CD8-positive, alpha-beta T cell (primary cell): ENCODE measurements at regions of chr2 and their contacts with region 1.

Region 1: DNA sequence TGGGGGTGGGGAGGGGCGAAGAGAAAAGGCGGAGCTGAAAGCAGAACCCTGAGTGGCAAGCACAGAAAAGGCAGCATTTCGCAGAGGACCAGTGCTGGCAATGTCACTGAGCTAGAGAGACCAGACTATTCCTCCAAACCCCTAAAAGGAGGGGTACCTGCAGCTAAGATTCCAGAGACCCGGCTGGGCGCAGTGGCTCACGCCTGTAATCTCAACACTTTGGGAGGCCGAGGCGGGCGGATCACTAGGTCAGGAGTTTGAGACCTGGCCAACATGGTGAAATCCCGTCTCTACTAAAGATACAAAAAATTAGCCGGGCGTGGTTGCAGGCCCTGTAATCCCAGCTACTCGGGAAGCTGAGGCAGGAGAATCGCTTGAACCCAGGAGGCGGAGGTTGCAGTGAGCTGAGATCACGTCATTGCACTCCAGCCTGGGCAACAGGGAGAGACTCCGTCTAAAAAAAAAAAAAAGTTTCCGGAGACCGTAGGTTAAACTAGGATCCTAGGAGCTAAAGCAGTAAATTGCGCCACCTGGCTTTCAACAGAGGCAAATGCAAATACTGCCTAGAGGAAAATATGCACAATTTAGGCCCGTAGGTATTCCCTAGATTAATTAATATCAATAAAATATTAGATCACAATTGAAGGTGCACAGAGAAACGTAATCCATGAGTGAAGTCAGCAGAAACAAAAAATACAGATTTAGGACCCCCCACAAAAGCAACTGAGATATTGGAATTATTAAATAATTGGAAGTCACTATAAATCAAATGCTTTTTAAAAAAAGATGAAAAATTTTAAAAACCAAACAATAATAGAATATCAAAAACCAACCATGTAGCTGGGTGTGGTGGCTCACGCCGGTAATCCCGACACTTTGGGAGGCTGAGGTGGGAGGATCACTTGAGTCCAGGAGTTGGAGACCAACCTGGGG is 4.9 kb downstream of the UCN start:
- DNase-seq: peak in 5 of 9 experiments; percentile 43 to 76 (median 52)
- ATAC-seq: peak; percentile 69
- H3K4me3 ChIP-seq: peak overlapping the region; percentile 2 to 45
- H3K4me3 Mint-ChIP-seq: peak overlapping the region; percentile 74
- H3K27ac ChIP-seq: no peak overlapping the region
- H3K27ac Mint-ChIP-seq: no peak overlapping the region
- H3K4me1 ChIP-seq: peaks cover 14% of the 10 kb centered on the region
- H3K4me1 Mint-ChIP-seq: peaks cover 9% of the 10 kb centered on the region
- H3K27me3 ChIP-seq: peaks cover 5 to 6% of the 10 kb centered on the region in 2 experiments
- H3K27me3 Mint-ChIP-seq: peaks cover 28% of the 10 kb centered on the region
- CTCF ChIP-seq: peak; percentile 90

Region 2: DNA sequence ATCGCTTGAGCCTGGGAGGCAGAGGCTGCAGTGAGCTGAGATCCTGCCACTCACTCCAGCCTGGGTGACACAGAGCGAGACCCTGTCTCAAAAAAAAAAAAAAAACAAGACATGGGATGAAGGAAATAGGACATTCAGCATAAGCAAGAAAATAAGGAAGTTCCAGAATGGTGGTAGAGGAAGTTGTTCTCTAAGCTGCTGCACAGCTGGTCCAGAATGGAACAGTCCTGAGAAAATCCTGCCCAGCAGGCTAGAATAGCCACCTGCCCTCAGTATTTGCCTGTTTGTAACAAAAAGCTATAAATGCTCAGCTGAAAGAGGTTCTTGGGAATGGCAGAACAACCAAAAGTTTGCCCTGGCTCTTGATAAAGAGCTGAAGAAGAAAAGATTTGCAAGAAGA is 344.0 kb before region 1 on chr2:
- CTCF ChIA-PET with region 1: interaction called, 20 read pairs
- POLR2A ChIA-PET with region 1: no interaction called
- intact Hi-C with region 1: loop called (anchors 1 kb)
- DNase-seq: no peak
- ATAC-seq: no peak
- H3K4me3 ChIP-seq: no peak overlapping the region
- H3K4me3 Mint-ChIP-seq: no peak overlapping the region
- H3K27ac ChIP-seq: no peak overlapping the region
- H3K27ac Mint-ChIP-seq: no peak overlapping the region
- H3K4me1 ChIP-seq: no peaks in the 10 kb centered on the region
- H3K4me1 Mint-ChIP-seq: no peaks in the 10 kb centered on the region
- H3K27me3 ChIP-seq: peaks cover 0 to 2% of the 10 kb centered on the region in 2 experiments
- H3K27me3 Mint-ChIP-seq: peaks cover 35% of the 10 kb centered on the region
- CTCF ChIP-seq: no peak

Region 3: GRCh38 chr2:27249891-27250651 is 53.3 kb before region 1 on chr2:
- CTCF ChIA-PET with region 1: interaction called, 13 read pairs
- POLR2A ChIA-PET with region 1: no interaction called
- intact Hi-C with region 1: loop called (anchors 1 to 2 kb)
- DNase-seq: peak in 8 of 9 experiments; percentile 18 to 65 (median 53)
- ATAC-seq: peak; percentile 79
- H3K4me3 ChIP-seq: no peak overlapping the region
- H3K4me3 Mint-ChIP-seq: no peak overlapping the region
- H3K27ac ChIP-seq: no peak overlapping the region
- H3K27ac Mint-ChIP-seq: no peak overlapping the region
- H3K4me1 ChIP-seq: peaks cover 4% of the 10 kb centered on the region
- H3K4me1 Mint-ChIP-seq: peaks cover 2% of the 10 kb centered on the region
- H3K27me3 ChIP-seq: peaks cover 0 to 3% of the 10 kb centered on the region in 2 experiments
- H3K27me3 Mint-ChIP-seq: peaks cover 15% of the 10 kb centered on the region
- CTCF ChIP-seq: peak; percentile 56

Region 4: DNA sequence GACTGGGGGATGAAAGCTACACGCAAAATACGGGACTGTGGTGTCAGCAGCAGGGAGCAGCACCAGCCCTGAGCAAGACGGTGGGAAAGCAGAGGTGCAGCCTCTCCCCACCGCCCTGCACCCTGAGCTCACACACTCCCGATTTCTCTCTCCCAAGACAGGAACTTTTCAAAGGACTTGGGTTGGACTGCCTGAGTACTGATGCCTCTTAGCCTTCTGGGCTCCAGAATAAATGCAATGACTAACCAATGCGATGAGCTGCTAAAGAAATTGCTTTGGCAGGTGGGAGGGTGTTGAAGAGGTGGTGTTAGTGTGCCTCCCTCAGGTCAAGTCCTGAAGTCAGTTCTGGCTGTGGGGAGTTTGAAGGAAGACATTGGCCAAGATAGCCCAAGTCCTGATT is 11.5 kb before region 1 on chr2:
- CTCF ChIA-PET with region 1: interaction called, 36 read pairs
- POLR2A ChIA-PET with region 1: no interaction called
- intact Hi-C with region 1: no loop called
- DNase-seq: no peak
- ATAC-seq: no peak
- H3K4me3 ChIP-seq: no peak overlapping the region
- H3K4me3 Mint-ChIP-seq: no peak overlapping the region
- H3K27ac ChIP-seq: no peak overlapping the region
- H3K27ac Mint-ChIP-seq: no peak overlapping the region
- H3K4me1 ChIP-seq: no peaks in the 10 kb centered on the region
- H3K4me1 Mint-ChIP-seq: no peaks in the 10 kb centered on the region
- H3K27me3 ChIP-seq: no peaks in the 10 kb centered on the region
- H3K27me3 Mint-ChIP-seq: peaks cover 12% of the 10 kb centered on the region
- CTCF ChIP-seq: no peak

Region 5: GRCh38 chr2:27322766-27323595 is 19.6 kb after region 1 on chr2 and contains the start of gene MPV17:
- CTCF ChIA-PET with region 1: interaction called, 11 read pairs
- POLR2A ChIA-PET with region 1: interaction called, 5 read pairs
- intact Hi-C with region 1: loop called in 1 of 2 experiments (anchors 1 kb)
- DNase-seq: peak; percentile 65 to 93 (median 87)
- ATAC-seq: peak; percentile 96
- H3K4me3 ChIP-seq: peak within 1 kb of the TSS; percentile 80 to 81
- H3K4me3 Mint-ChIP-seq: peak within 1 kb of the TSS; percentile 99
- H3K27ac ChIP-seq: peak within 1 kb of the TSS; percentile 89 to 94
- H3K27ac Mint-ChIP-seq: peak within 1 kb of the TSS; percentile 99
- H3K4me1 ChIP-seq: peaks cover 9% of the 10 kb centered on the region
- H3K4me1 Mint-ChIP-seq: peaks cover 25% of the 10 kb centered on the region
- H3K27me3 ChIP-seq: no peaks in the 10 kb centered on the region
- H3K27me3 Mint-ChIP-seq: no peaks in the 10 kb centered on the region
- CTCF ChIP-seq: no peak
- total RNA-seq, gene MPV17: 23.6 to 26.0 TPM

Region 6: DNA sequence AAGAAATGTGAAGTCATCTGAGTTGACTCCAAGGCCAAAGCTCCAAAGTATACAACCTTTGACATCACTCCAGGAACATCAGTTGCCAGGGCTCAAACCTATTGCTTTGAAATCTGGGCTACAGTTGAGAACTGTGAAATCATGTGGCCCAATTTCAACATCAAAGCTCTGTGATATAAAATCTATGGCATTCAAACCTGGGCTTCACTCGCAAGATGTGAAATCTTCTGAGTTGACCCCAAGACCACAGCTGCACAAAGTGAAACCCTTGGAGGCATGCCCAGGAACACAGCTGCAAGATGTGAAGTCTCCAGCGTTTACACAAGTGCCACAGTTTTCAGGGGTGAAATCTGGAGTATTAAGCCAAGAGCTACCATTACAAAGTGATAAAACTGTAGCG is 270.1 kb after region 1 on chr2:
- CTCF ChIA-PET with region 1: no interaction called
- POLR2A ChIA-PET with region 1: no interaction called
- intact Hi-C with region 1: no loop called
- DNase-seq: no peak
- ATAC-seq: no peak
- H3K4me3 ChIP-seq: no peak overlapping the region
- H3K4me3 Mint-ChIP-seq: no peak overlapping the region
- H3K27ac ChIP-seq: no peak overlapping the region
- H3K27ac Mint-ChIP-seq: no peak overlapping the region
- H3K4me1 ChIP-seq: no peaks in the 10 kb centered on the region
- H3K4me1 Mint-ChIP-seq: peaks cover 6% of the 10 kb centered on the region
- H3K27me3 ChIP-seq: no peaks in the 10 kb centered on the region
- H3K27me3 Mint-ChIP-seq: peaks cover 9% of the 10 kb centered on the region
- CTCF ChIP-seq: no peak